ENCODE measurements at regions of chr11 and their contacts with region 1.

Region 1: DNA sequence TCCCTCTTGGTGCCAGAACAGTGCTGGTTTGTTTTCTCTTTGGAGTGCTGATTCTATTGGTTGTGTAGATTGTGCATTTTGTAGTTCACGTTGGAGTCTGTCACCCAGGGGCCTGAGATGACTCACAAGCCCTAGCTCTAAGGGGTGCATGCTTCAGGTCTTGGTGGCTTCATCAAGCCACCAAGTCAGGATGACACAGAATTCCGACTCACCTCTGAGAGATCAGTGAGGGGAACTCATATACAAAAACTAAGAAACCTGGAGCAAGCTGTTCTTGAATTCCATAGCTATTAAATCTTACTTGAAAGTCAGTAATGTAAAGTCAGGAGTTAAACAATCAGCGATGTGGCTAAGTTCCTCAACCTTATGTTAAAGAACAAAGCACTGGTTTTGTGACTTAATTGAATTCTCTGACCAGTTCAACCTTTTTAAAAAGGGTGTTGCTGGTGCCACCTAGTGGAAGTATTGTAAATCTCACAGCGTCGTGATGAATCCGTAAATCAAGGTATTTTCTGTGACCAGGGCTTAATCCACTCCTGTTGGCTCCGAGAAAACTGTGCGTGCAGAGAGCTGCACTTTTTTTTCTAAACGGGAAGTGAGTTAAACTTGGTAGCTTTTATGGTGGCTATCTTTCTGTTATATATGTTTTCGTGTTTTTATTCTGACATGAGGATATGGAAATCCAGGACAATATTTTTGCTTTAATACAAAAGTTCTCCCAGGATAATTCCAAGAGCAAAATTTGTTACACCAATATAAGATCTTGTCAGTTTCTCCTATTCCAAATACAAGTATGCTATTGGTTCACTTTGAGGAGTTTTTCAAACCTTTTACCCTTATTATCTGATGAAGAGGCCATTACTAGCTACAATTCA is 14.6 kb downstream of the MMP13 start:
- DNase-seq: peak; percentile 49 to 70 (median 64)
- ATAC-seq: peak; percentile 85
- H3K4me3 ChIP-seq: no peak overlapping the region
- H3K27ac ChIP-seq: no peak overlapping the region
- H3K4me1 ChIP-seq: no peaks in the 10 kb centered on the region
- H3K27me3 ChIP-seq: no peaks in the 10 kb centered on the region
- CTCF ChIP-seq: peak; percentile 33 to 88 (median 85)
- POLR2A ChIP-seq: no peak

Region 2: DNA sequence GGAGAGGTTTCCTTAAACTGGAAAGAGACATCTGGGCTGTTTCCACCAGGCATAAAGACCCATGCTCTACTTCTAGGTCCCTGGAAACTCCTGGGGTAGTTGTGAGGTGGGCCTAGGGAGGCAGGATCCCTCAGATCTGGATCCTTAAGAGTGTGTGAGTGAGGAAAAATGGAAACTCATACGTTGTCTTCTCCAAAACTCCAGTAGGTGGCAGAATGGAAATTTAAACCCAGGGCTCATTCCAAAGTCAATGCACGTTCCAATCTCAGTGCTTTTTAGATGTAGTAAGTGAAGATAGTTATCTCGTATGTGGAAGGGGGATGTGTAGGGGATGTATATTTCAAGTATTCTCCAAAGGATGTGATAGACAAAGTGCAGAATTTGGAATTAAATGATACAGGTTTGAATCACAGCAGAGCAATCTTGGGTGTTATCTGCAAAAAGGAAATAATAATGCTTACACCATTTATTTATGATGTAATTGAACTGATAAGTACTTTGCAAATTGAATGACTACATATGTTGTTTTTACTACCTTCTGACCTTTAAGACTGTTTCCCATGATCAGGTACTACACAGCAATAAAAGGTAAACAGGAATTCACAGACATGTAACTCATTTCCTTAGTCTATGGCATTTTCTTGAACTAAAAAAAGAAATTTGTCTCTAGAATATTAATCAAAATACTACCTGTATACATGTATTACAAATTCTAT is 129.8 kb before region 1 on chr11:
- intact Hi-C with region 1: loop called (anchors 10 kb)
- DNase-seq: no peak
- ATAC-seq: no peak
- H3K4me3 ChIP-seq: no peak overlapping the region
- H3K27ac ChIP-seq: no peak overlapping the region
- H3K4me1 ChIP-seq: no peaks in the 10 kb centered on the region
- H3K27me3 ChIP-seq: no peaks in the 10 kb centered on the region
- CTCF ChIP-seq: peak in 6 of 7 experiments; percentile 10 to 33 (median 26)
- POLR2A ChIP-seq: no peak